ENCODE measurements at regions of chrX and their contacts with region 1.

Region 1: GRCh38 chrX:136767104-136767941 is 13.4 kb downstream of the ARHGEF6 start:
- DNase-seq: peak; percentile 89

Region 2: GRCh38 chrX:136397001-136397400 is 370.3 kb before region 1 on chrX:
- intact Hi-C with region 1: no loop called
- DNase-seq: no peak

Region 3: DNA sequence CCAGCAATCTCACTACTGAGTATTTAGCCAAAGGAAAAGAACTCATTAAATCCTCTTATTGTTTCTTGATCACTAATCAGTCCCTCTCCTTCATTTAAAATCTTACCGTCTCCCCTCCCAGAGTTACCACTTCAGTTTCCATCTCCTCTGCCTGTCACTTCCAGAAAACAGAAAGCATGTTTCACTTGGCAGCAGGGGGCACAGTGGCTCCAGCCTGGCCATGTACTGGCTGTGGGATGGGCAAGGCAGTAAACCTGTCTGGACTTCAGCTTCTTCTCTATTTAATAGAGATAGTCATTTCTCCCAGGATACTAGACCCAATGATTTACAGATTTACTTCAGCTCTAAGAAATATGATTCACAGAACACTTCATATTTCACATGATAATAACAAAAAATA is 56.2 kb before region 1 on chrX:
- intact Hi-C with region 1: loop called in 1 of 2 experiments (anchors 2 kb)
- DNase-seq: no peak

Region 4: GRCh38 chrX:136866337-136867095 is 99.2 kb after region 1 on chrX:
- intact Hi-C with region 1: loop called in 1 of 2 experiments (anchors 10 kb)
- DNase-seq: no peak

Region 5: DNA sequence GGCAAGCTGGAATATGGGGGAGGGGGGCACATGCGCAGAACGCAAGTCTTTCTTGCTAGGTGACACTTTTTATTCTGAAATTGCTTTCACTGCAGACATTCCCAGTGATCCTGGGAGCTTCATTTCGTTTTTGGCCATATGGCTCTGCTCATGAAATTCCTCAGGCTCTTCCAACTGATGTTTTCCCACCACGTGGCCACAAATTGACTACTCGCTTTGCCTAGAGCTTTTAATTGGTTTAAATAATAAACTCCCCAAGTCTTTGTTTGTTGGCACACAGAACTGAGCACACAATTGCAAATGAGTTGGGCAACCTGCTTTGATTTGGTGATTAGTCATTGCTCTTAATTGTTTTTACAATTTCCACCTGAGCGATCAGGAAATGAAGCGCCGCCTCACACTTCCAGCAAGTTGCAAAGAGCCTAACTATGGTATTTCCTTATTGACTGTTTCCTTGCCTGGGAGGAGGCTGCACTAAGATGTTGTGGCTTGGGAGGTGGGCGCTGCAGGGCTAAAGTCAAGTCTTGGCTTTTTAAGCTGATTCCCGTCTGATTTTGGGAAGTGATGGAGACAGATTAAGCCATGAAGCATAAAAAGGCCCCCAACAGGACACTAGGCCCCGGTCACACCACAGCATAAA is 1081.1 kb after region 1 on chrX:
- intact Hi-C with region 1: loop called in 1 of 2 experiments (anchors 10 kb)
- DNase-seq: no peak

Measured in posterior vena cava (tissue), 2 donors.